Prostate gland (tissue), 2 donors: ENCODE measurements at regions of chr1 and their contacts with region 1.

Region 1: GRCh38 chr1:154627257-154628120 is 19.5 kb upstream of the ADAR start:
- DNase-seq: peak; percentile 81
- H3K4me3 ChIP-seq: peak overlapping the region; percentile 75 to 76
- H3K27ac ChIP-seq: peak overlapping the region; percentile 79 to 81
- H3K4me1 ChIP-seq: peaks cover 7% of the 10 kb centered on the region
- H3K27me3 ChIP-seq: no peaks in the 10 kb centered on the region
- CTCF ChIP-seq: no peak
- POLR2A ChIP-seq: no peak

Region 2: GRCh38 chr1:154419620-154420571 is 207.6 kb before region 1 on chr1:
- intact Hi-C with region 1: loop called (anchors 10 kb)
- DNase-seq: peak; percentile 98
- H3K4me3 ChIP-seq: no peak overlapping the region
- H3K27ac ChIP-seq: peak overlapping the region; percentile 91 to 96
- H3K4me1 ChIP-seq: peaks cover 56% of the 10 kb centered on the region
- H3K27me3 ChIP-seq: no peaks in the 10 kb centered on the region
- CTCF ChIP-seq: no peak
- POLR2A ChIP-seq: peak; percentile 33

Region 3: DNA sequence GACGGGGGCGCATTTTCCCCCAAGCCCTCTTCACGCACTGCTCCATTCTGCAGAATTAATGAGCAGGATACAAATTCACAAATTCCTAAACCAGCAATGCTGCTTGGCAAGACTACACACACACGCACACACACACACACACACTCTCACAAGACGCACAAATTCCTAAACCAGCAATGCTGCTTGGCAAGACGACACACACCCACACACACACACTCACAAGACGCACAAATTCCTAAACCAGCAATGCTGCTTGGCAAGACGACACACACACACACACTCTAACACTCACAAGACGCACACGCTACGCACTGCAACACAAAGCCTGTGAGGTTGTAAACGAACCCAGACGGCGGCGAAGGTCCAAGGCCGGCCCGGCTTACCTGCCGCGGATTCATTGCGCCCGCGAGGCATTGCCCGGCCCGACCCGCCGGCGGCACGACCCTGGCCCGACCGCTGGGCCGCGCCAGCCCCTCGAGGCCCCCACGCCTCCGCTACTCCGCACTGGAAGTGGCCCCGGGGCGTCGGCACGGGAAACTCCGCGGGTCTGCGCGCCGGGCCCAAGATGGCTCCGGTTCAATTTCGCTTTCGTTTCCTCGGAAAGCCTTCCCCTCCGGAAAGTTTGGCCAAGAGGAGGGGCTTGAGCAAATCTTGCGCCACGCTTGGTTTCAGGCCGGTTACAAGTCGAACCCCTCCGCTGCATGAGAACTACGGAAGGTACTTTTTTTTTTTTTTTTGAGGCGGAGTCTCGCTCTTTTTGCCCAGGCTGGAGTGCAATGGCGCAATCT is 19.7 kb before region 1 on chr1 and contains the start of gene ADAR:
- intact Hi-C with region 1: loop called (anchors 2 kb)
- DNase-seq: peak; percentile 91
- H3K4me3 ChIP-seq: peak within 1 kb of the TSS; percentile 89 to 99
- H3K27ac ChIP-seq: peak within 1 kb of the TSS; percentile 93 to 97
- H3K4me1 ChIP-seq: peaks cover 4% of the 10 kb centered on the region
- H3K27me3 ChIP-seq: no peaks in the 10 kb centered on the region
- CTCF ChIP-seq: peak in 2 of 4 experiments; percentile 3 to 6
- POLR2A ChIP-seq: peak; percentile 54
- total RNA-seq, gene ADAR: 98.1 to 181 TPM

Region 4: DNA sequence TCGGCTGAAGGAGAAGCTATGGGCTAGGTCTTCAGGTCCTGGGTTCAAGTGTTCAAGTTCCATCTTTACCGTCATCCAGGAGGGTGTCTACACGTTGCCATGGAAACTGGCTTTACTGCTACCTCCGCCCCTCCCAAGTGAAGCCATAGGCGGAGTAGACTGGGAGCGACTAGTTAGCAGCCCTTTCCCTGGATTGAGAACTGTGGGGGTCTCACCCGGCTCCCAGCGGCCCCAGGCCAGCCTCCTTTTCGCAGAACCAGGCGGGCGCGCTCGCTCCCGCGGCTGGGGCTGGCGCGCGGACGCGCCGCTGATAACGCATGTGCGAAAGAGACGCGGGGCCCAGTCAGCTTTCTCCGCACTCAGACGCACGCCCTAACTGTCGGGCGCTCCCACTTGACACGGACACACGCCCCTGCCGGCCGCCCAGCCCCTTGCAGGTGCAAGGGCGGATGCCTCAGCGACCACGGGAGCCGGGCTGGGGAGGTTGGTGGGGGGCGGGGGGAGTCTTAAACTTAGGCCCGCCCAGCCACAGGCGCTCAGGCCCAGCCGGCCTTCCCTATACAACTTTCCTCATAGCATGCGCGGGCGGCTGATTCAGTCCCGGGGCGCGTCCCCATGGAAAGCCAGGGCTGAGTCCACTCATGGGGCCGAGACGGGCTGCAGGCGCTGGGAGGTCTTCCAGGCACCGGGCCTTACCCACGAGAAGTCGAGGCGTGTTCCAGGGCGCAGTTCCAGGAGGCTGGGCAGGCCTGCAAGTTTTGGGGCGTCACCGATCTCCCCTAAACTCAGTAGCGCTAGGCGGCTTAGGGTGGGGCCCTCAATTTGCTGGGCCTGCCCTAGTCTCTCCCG is 443.5 kb after region 1 on chr1:
- intact Hi-C with region 1: no loop called
- DNase-seq: peak; percentile 52
- H3K4me3 ChIP-seq: peak overlapping the region; percentile 27 to 37
- H3K27ac ChIP-seq: peak overlapping the region; percentile 54 to 60
- H3K4me1 ChIP-seq: peaks cover 10% of the 10 kb centered on the region
- H3K27me3 ChIP-seq: no peaks in the 10 kb centered on the region
- CTCF ChIP-seq: peak in 2 of 4 experiments; percentile 46 to 56
- POLR2A ChIP-seq: no peak

Region 5: GRCh38 chr1:155527677-155528076 is 900.2 kb after region 1 on chr1:
- intact Hi-C with region 1: no loop called
- DNase-seq: no peak
- H3K4me3 ChIP-seq: no peak overlapping the region
- H3K27ac ChIP-seq: no peak overlapping the region
- H3K4me1 ChIP-seq: no peaks in the 10 kb centered on the region
- H3K27me3 ChIP-seq: no peaks in the 10 kb centered on the region
- CTCF ChIP-seq: no peak
- POLR2A ChIP-seq: no peak